ENCODE measurements at regions of chr1 and their contacts with region 1.

Region 1: GRCh38 chr1:63615768-63616420 is 22.7 kb downstream of the PGM1 start:
- DNase-seq: peak; percentile 82
- H3K4me3 ChIP-seq: no peak overlapping the region
- H3K27ac ChIP-seq: no peak overlapping the region
- H3K4me1 ChIP-seq: no peaks in the 10 kb centered on the region
- H3K27me3 ChIP-seq: no peaks in the 10 kb centered on the region
- CTCF ChIP-seq: peak; percentile 50 to 59
- POLR2A ChIP-seq: no peak

Region 2: DNA sequence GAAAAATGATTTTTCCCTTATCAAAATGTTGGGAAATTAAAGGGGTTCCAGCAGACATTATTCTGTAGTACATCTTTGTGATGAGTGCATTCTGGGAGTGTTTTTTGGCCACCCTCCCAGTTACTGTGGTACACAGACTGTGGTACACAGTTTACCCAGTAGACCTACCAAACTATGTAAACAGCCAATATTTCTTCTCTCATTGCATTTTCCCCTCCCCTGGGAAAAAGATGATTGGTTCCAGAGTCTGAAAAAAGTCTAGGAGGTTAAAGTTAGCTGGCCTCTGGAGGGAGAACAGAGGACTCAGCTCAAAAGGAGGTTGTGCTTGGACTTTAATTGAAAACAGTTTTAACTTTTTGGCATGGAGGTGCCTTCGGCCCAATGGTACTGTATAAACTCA is 19.8 kb after region 1 on chr1:
- CTCF ChIA-PET with region 1: no interaction called
- POLR2A ChIA-PET with region 1: no interaction called
- dilution Hi-C with region 1: no loop called
- intact Hi-C with region 1: no loop called
- DNase-seq: no peak
- H3K4me3 ChIP-seq: no peak overlapping the region
- H3K27ac ChIP-seq: no peak overlapping the region
- H3K4me1 ChIP-seq: no peaks in the 10 kb centered on the region
- H3K27me3 ChIP-seq: no peaks in the 10 kb centered on the region
- CTCF ChIP-seq: no peak
- POLR2A ChIP-seq: no peak

Region 3: GRCh38 chr1:63935143-63935542 is 319.2 kb after region 1 on chr1:
- CTCF ChIA-PET with region 1: no interaction called
- POLR2A ChIA-PET with region 1: no interaction called
- dilution Hi-C with region 1: no loop called
- intact Hi-C with region 1: no loop called
- DNase-seq: no peak
- H3K4me3 ChIP-seq: no peak overlapping the region
- H3K27ac ChIP-seq: no peak overlapping the region
- H3K4me1 ChIP-seq: no peaks in the 10 kb centered on the region
- H3K27me3 ChIP-seq: no peaks in the 10 kb centered on the region
- CTCF ChIP-seq: no peak
- POLR2A ChIP-seq: no peak

Region 4: DNA sequence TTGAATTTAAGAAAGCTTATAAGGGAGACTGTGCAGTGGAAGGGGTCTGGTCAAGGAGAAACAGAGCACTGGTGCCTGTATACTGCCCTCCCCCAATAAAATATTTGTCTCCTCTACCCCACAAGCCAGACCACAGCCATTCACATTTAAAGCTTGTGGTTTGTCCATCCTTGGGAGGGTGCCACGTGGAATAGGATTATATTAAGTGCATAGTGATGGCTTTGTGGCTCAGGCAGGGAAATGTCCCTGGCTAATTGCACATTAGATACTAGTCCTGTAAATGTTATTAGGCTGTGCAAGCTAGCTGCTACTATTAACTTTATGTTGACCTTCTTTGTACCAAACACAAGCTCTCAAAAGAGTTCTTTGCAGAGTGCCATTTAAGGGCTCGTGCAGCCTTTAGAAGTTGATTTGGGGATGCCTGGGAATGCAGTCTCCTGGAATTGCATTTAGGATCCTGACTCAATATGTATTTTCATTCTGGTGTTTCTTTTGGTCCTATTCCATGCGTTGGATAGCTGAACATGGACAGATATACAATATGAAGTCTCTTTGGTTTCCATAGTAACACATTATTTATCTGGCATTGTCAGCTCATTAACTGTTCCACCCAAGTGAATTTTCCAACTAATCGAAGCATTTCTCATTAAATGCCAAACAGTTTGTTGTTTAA is 368.5 kb after region 1 on chr1:
- CTCF ChIA-PET with region 1: no interaction called
- POLR2A ChIA-PET with region 1: no interaction called
- dilution Hi-C with region 1: no loop called
- intact Hi-C with region 1: no loop called
- DNase-seq: no peak
- H3K4me3 ChIP-seq: no peak overlapping the region
- H3K27ac ChIP-seq: no peak overlapping the region
- H3K4me1 ChIP-seq: no peaks in the 10 kb centered on the region
- H3K27me3 ChIP-seq: no peaks in the 10 kb centered on the region
- CTCF ChIP-seq: no peak
- POLR2A ChIP-seq: no peak

Region 5: DNA sequence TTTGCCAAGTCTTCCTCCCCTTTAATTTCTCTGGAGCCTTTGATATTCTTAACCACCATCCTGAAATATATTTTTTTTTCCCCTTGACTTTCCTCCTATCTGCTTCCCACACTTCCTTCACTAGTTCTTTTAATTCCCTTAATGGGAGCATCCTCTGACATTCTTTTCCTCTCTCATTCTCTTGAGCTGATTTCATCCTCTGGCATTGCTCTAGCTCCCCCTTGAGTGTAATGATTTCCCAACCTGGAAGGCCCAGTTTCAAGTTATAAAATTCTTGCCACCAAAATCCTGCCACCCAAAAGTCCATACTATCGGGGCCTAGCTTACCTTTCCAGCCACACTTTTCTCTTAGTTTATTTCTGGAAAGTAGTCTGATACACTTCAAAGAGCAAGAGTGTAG is 548.1 kb after region 1 on chr1:
- CTCF ChIA-PET with region 1: interaction called, 11 read pairs
- POLR2A ChIA-PET with region 1: no interaction called
- dilution Hi-C with region 1: no loop called
- intact Hi-C with region 1: no loop called
- DNase-seq: peak; percentile 6
- H3K4me3 ChIP-seq: no peak overlapping the region
- H3K27ac ChIP-seq: no peak overlapping the region
- H3K4me1 ChIP-seq: no peaks in the 10 kb centered on the region
- H3K27me3 ChIP-seq: no peaks in the 10 kb centered on the region
- CTCF ChIP-seq: peak in 1 of 2 donors; percentile 9
- POLR2A ChIP-seq: no peak